ENCODE measurements at regions of chr1 and their contacts with region 1.

Region 1: DNA sequence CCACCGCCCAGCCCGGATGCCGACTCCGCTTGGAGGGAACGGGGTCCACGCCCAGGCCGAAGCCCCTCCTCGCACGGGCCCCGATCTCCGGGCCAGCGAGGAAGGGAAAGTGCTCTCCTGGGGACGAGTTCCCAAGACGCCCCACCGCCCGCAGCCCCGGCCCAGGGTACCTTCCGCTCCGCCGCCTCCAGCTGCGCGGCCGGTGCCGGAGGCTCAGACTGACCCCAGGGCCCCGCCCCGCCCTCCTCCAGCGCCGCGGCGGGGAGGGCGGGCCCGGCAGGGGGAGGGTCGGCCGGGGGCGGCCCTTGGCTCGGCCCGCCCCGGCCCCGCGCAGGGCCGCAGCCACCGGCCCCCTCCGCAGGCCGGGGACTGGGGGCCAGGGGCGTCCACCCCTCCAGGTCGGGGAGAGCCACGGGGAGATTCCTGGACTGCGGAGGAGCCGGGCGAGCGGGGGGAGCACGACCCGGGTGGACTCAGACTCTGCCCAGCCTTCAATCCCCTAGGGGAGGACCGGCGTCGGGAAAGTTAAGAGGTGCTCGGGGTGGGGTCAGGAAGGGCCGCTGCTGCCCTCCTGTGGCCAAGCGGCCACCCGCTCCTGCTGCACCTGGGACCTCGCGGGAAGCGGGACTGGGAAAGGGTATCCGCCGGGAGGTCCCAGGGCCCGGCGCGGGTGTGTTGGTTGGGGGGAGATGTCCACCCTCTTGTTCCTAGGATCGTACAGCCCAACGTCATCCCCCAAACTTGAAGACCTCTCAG is at the start of gene RHOC:
- DNase-seq: peak; percentile 91 to 95
- ATAC-seq: peak; percentile 91
- H3K4me3 ChIP-seq: peak within 1 kb of the TSS; percentile 75 to 91
- H3K27ac ChIP-seq: peak within 1 kb of the TSS; percentile 85 to 90
- H3K4me1 ChIP-seq: no peaks in the 10 kb centered on the region
- H3K27me3 ChIP-seq: no peaks in the 10 kb centered on the region
- total RNA-seq, gene RHOC: 269 to 316 TPM

Region 2: DNA sequence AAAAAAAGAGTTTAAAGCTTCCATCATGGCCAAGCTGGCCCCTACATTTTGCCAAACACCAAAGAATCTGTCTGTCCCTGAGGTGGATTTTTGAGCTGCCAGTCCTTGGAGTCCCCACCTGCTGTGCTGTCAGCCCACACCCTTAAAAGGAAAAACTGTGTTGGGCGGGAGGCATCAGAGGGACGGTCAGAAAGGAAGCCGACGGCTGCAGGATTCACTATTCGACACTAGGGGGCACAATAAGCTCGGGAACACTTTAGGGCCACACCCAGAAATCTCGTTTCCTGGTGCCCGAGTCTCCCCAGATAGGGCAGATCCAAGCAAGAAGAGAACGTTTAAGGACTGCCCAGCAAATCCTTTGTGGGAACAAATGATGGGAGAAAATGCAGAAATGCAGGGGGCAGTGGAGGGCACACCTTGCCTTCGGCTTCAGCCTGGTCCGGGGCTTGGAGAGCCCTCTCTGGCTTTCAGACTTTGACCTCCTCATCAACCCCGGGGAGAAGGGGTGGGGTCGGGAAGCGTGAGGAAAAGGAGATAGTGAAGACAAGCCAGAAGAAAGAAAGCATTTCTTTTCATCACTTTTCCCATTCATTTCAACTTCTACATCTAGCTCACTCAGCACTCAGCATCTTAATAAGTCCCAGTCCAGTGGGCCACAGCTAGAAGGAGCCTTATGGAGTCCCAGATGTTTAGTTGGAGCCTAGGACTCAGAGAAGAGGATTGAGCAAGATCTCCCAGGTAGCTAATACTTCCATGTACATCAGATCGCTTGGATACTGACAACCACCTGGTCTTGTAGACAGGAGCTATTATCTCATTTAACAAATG is 316.1 kb before region 1 on chr1:
- intact Hi-C with region 1: loop called (anchors 2 to 5 kb)
- DNase-seq: peak; percentile 92 to 93
- ATAC-seq: peak; percentile 93
- H3K4me3 ChIP-seq: peak overlapping the region; percentile 48 to 49
- H3K27ac ChIP-seq: peak overlapping the region; percentile 48 to 73
- H3K4me1 ChIP-seq: peaks cover 0 to 4% of the 10 kb centered on the region in 2 donors
- H3K27me3 ChIP-seq: no peaks in the 10 kb centered on the region

Region 3: DNA sequence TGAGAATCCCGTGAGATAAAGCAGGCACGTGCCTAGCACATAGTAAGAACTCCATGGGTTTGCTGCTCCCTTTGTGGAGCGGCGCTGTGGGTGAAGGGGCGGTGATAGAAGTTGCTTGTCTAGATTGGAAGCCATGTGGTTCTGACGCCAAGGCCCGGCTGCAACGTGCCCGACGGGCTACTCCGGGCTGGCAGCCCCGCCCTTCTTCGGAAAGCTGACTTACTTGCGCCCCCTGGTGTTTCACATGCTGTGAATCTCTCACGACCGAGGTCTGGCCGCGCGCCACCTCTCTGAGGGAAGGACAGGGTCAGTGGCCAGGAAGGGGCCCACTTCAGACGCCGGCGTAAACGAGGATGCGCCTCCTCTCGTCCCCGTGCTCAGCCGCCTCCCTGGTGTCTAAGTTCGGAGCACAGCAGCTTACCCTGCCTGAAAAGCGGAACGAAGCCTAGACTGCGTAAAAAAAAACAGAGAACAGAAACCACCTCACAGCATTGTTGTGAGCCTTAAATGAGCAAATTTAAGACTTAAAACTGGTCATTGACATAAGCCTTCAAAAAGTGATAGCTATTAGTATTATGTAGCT is 240.9 kb before region 1 on chr1:
- intact Hi-C with region 1: loop called in 1 of 2 experiments (anchors 10 kb)
- DNase-seq: peak; percentile 98
- ATAC-seq: peak; percentile 96
- H3K4me3 ChIP-seq: peak overlapping the region; percentile 38 to 63
- H3K27ac ChIP-seq: peak overlapping the region in 1 of 2 donors; percentile 60
- H3K4me1 ChIP-seq: no peaks in the 10 kb centered on the region
- H3K27me3 ChIP-seq: no peaks in the 10 kb centered on the region

Region 4: GRCh38 chr1:112619520-112620376 is 87.3 kb before region 1 on chr1 and contains the start of gene CAPZA1:
- intact Hi-C with region 1: loop called (anchors 1 to 5 kb)
- DNase-seq: peak; percentile 94 to 97
- ATAC-seq: peak; percentile 99
- H3K4me3 ChIP-seq: peak within 1 kb of the TSS; percentile 63 to 92
- H3K27ac ChIP-seq: peak within 1 kb of the TSS; percentile 83 to 87
- H3K4me1 ChIP-seq: peaks cover 0 to 2% of the 10 kb centered on the region in 2 donors
- H3K27me3 ChIP-seq: no peaks in the 10 kb centered on the region
- total RNA-seq, gene CAPZA1: 105 to 109 TPM

Region 5: DNA sequence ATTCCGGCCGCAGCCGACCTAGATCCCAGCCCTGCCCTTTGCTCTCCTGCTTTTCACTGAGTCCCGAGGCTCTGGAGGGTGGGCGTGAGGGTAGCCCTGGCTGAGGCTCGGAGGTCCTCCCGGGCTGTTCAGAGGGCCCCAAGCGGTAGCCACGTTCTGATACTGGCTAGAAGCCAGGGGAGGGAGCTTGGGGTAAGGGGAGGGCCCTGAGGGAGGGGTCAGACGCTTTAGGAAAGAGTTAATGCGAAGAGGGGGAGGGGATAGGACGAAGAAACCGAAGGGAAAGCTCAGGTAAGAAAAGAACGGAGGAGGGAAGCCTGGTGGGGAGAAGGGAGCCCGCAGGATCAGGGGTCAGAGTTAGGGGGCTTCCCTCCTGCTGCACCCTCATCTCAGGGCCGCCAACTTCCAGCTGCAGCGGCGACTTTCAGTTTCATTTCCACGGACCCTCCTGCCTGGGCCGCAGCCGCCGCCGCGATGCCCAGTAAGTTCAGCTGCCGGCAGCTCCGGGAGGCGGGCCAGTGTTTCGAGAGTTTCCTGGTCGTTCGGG is 32.6 kb before region 1 on chr1 and contains the start of gene MOV10:
- intact Hi-C with region 1: loop called in 1 of 2 experiments (anchors 5 kb)
- DNase-seq: peak; percentile 84 to 90
- ATAC-seq: peak; percentile 79
- H3K4me3 ChIP-seq: peak within 1 kb of the TSS; percentile 60 to 83
- H3K27ac ChIP-seq: peak within 1 kb of the TSS; percentile 9 to 19
- H3K4me1 ChIP-seq: no peaks in the 10 kb centered on the region
- H3K27me3 ChIP-seq: no peaks in the 10 kb centered on the region
- total RNA-seq, gene MOV10: 29.2 to 61.0 TPM

Measured in aorta (tissue), 5 donors.